ENCODE measurements at regions of chr2 and their contacts with region 1.

Region 1: DNA sequence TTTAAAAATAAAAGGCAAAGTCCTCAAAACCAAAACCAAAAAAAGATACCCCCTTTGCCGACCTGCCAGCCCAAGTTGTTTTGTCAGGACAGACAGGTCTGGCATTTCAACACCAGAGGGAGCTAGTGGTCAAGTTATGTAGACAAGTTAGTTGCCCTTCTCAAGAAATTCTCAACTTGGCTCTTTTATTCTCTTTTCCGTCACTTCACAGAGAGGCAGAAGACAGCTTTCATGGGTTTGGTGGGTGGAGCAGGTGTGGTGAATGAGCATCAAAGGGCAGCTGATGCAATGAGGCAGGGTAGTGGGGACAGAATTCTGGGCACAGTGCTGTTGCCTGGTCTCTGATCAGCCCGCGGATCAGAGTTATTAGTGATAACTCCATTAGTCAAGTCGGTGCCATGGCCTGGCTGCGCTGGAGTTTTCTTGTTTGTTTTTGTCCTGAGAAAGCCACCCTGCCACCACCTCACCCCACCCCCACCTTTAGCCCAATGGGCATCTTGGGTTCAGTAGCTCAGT is 303.7 kb upstream of the EPAS1 start:
- DNase-seq: peak; percentile 50 to 61 (median 54)
- H3K4me3 ChIP-seq: no peak overlapping the region
- H3K4me3 Mint-ChIP-seq: no peak overlapping the region
- H3K27ac ChIP-seq: no peak overlapping the region
- H3K27ac Mint-ChIP-seq: no peak overlapping the region
- H3K4me1 ChIP-seq: no peaks in the 10 kb centered on the region
- H3K4me1 Mint-ChIP-seq: peaks cover 2 to 6% (median 4%) of the 10 kb centered on the region in 4 donors
- H3K27me3 ChIP-seq: no peaks in the 10 kb centered on the region
- H3K27me3 Mint-ChIP-seq: no peaks in the 10 kb centered on the region

Region 2: DNA sequence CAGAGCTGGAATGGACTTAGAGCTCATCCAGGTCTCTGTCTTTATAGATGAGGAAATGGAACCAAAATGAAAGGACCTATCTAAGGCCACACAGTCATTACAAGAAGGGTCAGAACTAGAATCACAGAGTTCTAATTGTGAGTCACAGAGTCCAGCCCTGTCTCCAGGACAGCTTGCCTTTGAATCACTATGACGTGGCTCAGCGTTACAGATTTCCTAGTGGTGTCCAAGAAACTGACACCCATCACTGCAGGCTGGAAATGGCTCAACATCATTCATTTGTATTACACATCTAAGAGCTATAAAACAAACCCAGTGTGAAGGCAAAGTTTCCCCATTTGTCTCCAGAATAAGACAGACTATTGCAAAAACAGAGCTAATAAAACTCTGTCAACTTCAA is 820.0 kb before region 1 on chr2:
- CTCF ChIA-PET with region 1: no interaction called
- POLR2A ChIA-PET with region 1: no interaction called
- intact Hi-C with region 1: no loop called
- DNase-seq: no peak
- H3K4me3 ChIP-seq: no peak overlapping the region
- H3K4me3 Mint-ChIP-seq: no peak overlapping the region
- H3K27ac ChIP-seq: no peak overlapping the region
- H3K27ac Mint-ChIP-seq: no peak overlapping the region
- H3K4me1 ChIP-seq: peaks cover 4% of the 10 kb centered on the region
- H3K4me1 Mint-ChIP-seq: peaks cover 0 to 3% (median 3%) of the 10 kb centered on the region in 4 donors
- H3K27me3 ChIP-seq: peaks cover 6% of the 10 kb centered on the region
- H3K27me3 Mint-ChIP-seq: peaks cover 29 to 30% of the 10 kb centered on the region in 2 donors

Region 3: GRCh38 chr2:45643543-45644542 is 349.7 kb before region 1 on chr2:
- CTCF ChIA-PET with region 1: interaction called, 5 read pairs
- POLR2A ChIA-PET with region 1: no interaction called
- intact Hi-C with region 1: loop called (anchors 5 kb)
- DNase-seq: peak; percentile 47 to 76 (median 68)
- H3K4me3 ChIP-seq: peak overlapping the region in 1 of 2 donors; percentile 39
- H3K4me3 Mint-ChIP-seq: peak overlapping the region in 6 of 8 donors; percentile 12 to 69 (median 41)
- H3K27ac ChIP-seq: no peak overlapping the region
- H3K27ac Mint-ChIP-seq: peak overlapping the region in 2 of 7 donors; percentile 24 to 71
- H3K4me1 ChIP-seq: peaks cover 9% of the 10 kb centered on the region
- H3K4me1 Mint-ChIP-seq: peaks cover 0 to 8% (median 2%) of the 10 kb centered on the region in 4 donors
- H3K27me3 ChIP-seq: peaks cover 8% of the 10 kb centered on the region
- H3K27me3 Mint-ChIP-seq: peaks cover 16 to 18% of the 10 kb centered on the region in 2 donors

Region 4: GRCh38 chr2:45980161-45980852 is 13.2 kb before region 1 on chr2:
- CTCF ChIA-PET with region 1: interaction called, 10 read pairs
- POLR2A ChIA-PET with region 1: no interaction called
- intact Hi-C with region 1: no loop called
- DNase-seq: no peak
- H3K4me3 ChIP-seq: no peak overlapping the region
- H3K4me3 Mint-ChIP-seq: no peak overlapping the region
- H3K27ac ChIP-seq: no peak overlapping the region
- H3K27ac Mint-ChIP-seq: no peak overlapping the region
- H3K4me1 ChIP-seq: no peaks in the 10 kb centered on the region
- H3K4me1 Mint-ChIP-seq: peaks cover 0 to 2% (median 0%) of the 10 kb centered on the region in 4 donors
- H3K27me3 ChIP-seq: no peaks in the 10 kb centered on the region
- H3K27me3 Mint-ChIP-seq: no peaks in the 10 kb centered on the region

Region 5: GRCh38 chr2:46010925-46011490 is 17.5 kb after region 1 on chr2:
- CTCF ChIA-PET with region 1: interaction called, 19 read pairs
- POLR2A ChIA-PET with region 1: no interaction called
- intact Hi-C with region 1: no loop called
- DNase-seq: peak in 4 of 5 donors; percentile 21 to 35 (median 30)
- H3K4me3 ChIP-seq: no peak overlapping the region
- H3K4me3 Mint-ChIP-seq: no peak overlapping the region
- H3K27ac ChIP-seq: no peak overlapping the region
- H3K27ac Mint-ChIP-seq: no peak overlapping the region
- H3K4me1 ChIP-seq: no peaks in the 10 kb centered on the region
- H3K4me1 Mint-ChIP-seq: no peaks in the 10 kb centered on the region
- H3K27me3 ChIP-seq: no peaks in the 10 kb centered on the region
- H3K27me3 Mint-ChIP-seq: no peaks in the 10 kb centered on the region

Region 6: GRCh38 chr2:46461011-46461674 is 467.6 kb after region 1 on chr2:
- CTCF ChIA-PET with region 1: interaction called, 30 read pairs
- POLR2A ChIA-PET with region 1: no interaction called
- intact Hi-C with region 1: loop called (anchors 1 kb)
- DNase-seq: peak; percentile 53 to 71 (median 61)
- H3K4me3 ChIP-seq: no peak overlapping the region
- H3K4me3 Mint-ChIP-seq: no peak overlapping the region
- H3K27ac ChIP-seq: no peak overlapping the region
- H3K27ac Mint-ChIP-seq: peak overlapping the region in 2 of 7 donors; percentile 51 to 81
- H3K4me1 ChIP-seq: peaks cover 7% of the 10 kb centered on the region
- H3K4me1 Mint-ChIP-seq: peaks cover 4 to 12% (median 10%) of the 10 kb centered on the region in 4 donors
- H3K27me3 ChIP-seq: no peaks in the 10 kb centered on the region
- H3K27me3 Mint-ChIP-seq: peaks cover 0 to 2% of the 10 kb centered on the region in 2 donors

Measured in CD4-positive, alpha-beta memory T cell (primary cell).